ENCODE measurements at regions of chr5 and their contacts with region 1.

Region 1: DNA sequence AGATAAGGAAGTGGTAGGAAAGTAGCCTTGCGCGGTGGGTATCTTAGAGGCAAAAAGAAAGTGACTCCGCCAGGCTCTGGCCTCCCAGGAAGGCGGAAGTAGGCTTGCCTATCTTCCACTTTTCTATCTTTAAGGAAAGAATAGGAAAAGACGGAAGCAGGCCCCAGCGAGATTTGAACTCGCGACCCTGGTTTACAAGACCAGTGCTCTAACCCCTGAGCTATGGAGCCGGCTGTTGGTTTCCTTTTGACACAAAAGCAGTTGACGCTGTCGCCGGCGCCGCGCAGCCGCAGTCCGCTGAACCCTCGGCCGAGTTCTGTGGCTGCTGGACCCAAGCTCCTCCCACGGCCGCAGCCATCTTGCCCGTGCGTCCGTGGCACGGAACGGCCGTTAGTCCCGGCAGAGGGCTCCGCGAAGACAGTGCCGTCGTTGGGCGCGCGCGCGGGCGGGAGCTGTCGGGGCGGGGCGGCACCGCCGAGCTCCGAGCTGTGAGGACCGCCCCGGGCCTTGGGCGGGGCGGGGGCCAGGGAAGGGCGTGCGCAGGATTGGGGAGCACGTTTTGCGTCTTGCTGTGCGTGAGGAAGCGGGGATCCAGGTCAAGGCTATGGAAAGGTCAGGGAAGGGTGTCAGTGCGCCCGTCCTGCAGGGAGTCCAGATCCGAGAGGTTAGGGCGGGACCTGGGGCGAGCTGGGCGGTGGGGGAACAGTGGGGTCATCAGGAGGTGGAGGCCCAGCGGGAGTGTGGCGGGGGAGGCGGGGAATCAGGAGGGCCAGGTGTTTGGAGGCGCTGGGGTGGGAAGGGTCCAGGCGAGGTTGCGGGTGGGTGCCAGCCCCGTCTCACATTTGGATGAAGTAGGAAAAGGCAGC is 13.2 kb downstream of the TRIM7 start:
- DNase-seq: peak; percentile 90 to 100 (median 97)
- ATAC-seq: peak; percentile 55 to 62
- H3K4me3 Mint-ChIP-seq: peak overlapping the region; percentile 92 to 98 (median 98)
- H3K27ac Mint-ChIP-seq: peak overlapping the region; percentile 90 to 100 (median 96)
- H3K4me1 Mint-ChIP-seq: peaks cover 24 to 48% (median 29%) of the 10 kb centered on the region in 4 donors
- H3K27me3 Mint-ChIP-seq: peaks cover 0 to 15% (median 0%) of the 10 kb centered on the region in 5 donors

Region 2: GRCh38 chr5:180810210-180810958 is 381.4 kb before region 1 on chr5:
- POLR2A ChIA-PET with region 1: interaction called, 12 read pairs
- DNase-seq: peak; percentile 88 to 100 (median 96)
- ATAC-seq: peak; percentile 72 to 74
- H3K4me3 Mint-ChIP-seq: peak overlapping the region; percentile 83 to 99 (median 92)
- H3K27ac Mint-ChIP-seq: peak overlapping the region; percentile 93 to 100 (median 100)
- H3K4me1 Mint-ChIP-seq: peaks cover 47 to 84% (median 75%) of the 10 kb centered on the region in 4 donors
- H3K27me3 Mint-ChIP-seq: no peaks in the 10 kb centered on the region

Region 3: DNA sequence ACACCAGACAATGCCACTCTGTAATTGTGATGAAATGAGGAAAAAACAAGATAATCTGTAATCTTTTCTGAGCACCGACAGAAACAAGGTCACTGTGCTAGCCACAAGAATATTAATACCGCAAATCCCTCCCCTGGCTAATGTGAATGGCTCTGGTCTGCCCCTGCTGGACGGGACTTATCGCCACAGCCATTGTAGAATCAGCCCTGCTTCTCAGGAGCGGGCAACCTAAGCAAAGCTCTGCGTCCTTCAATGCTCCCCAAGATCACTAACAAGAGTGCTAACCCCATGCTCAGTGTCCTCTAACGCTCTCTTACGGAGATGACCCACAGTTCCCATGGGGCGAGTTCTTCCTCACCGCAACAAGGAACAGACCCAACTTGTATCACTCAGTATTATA is 103.5 kb before region 1 on chr5:
- POLR2A ChIA-PET with region 1: no interaction called
- DNase-seq: no peak
- ATAC-seq: no peak
- H3K4me3 Mint-ChIP-seq: no peak overlapping the region
- H3K27ac Mint-ChIP-seq: no peak overlapping the region
- H3K4me1 Mint-ChIP-seq: no peaks in the 10 kb centered on the region
- H3K27me3 Mint-ChIP-seq: peaks cover 16 to 58% (median 31%) of the 10 kb centered on the region in 5 donors

Region 4: DNA sequence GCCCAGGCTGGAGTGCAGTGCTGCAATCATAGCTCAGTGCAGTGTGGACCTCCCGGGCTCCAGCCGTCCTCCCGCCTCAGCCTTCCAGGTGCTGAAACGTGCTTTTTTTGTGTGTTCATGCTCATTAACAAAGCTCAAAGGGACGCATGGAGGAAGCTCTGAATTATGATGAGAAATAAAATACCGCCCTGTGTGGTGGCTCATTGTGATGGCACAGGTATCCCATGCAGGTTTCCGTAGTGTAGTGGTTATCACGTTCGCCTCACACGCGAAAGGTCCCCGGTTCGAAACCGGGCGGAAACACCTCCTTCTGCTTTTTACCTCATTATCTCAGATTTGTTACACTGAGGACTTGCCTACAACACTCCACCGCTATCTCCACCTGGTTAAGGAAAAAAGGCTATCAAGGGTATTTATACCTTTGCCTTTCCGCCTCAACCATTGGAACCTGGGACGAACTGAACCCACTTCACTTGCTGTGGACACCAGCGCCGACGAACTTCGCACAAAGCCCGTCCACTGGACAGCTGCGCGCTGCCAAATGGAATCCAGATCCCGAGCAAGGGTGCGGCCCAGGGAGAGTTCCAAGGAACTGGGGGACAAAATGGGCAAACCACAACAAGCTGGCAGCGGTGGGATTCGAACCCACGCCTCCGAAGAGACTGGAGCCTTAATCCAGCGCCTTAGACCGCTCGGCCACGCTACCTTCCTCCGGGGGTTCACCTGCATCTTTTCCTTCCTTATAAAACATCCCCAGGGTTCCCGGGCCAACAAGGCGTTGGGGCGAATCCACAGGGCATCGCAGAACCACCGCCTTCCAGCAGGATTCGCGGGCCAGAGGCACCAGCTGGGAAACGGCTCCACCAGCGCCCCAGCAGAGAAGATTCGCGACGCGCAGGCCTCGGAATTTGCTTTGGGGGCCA is 18.1 kb before region 1 on chr5:
- POLR2A ChIA-PET with region 1: interaction called, 35 read pairs
- DNase-seq: peak in 8 of 10 donors; percentile 25 to 82 (median 70)
- ATAC-seq: peak; percentile 80 to 91
- H3K4me3 Mint-ChIP-seq: peak overlapping the region; percentile 79 to 100 (median 94)
- H3K27ac Mint-ChIP-seq: peak overlapping the region; percentile 10 to 94 (median 86)
- H3K4me1 Mint-ChIP-seq: peaks cover 15 to 39% (median 33%) of the 10 kb centered on the region in 4 donors
- H3K27me3 Mint-ChIP-seq: peaks cover 0 to 44% (median 8%) of the 10 kb centered on the region in 5 donors

Region 5: DNA sequence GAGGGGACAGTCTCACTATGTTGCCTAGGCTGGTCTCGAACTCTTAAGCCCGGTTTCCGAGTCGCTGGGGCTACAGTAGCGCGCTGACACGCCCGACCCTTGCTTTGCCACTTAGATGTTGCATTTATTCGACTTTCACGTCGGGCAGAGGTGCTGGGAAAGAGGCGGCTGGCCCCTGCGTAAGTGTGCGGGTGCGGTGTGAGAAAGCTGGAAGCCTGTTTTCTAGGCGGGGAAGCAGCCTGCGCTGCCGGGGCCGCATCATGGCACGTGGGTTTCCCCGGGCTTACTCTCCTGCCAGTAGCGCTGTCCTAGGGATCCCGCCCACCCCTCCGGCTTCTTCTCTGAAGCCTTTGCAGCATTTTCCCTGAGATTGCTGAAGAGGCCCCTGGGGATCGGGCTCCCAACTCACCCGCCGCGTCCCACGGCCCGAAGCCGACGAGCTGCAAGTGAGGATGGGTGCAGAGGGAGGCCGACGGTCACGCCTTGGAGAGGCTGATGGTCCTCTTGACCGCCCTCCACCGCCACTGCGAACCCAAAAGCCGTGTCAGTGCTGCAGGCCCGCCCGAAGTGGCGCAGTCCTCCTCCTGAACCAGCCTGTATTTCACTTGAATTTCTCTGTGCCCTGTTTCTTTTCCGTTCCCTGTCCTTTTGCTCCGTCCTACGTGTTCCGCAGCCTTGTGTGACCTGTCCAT is 25.5 kb after region 1 on chr5:
- POLR2A ChIA-PET with region 1: interaction called, 286 read pairs
- DNase-seq: peak; percentile 46 to 82 (median 68)
- ATAC-seq: peak; percentile 29 to 36
- H3K4me3 Mint-ChIP-seq: peak overlapping the region; percentile 87 to 99 (median 98)
- H3K27ac Mint-ChIP-seq: peak overlapping the region; percentile 89 to 99 (median 96)
- H3K4me1 Mint-ChIP-seq: peaks cover 28 to 51% (median 48%) of the 10 kb centered on the region in 4 donors
- H3K27me3 Mint-ChIP-seq: peaks cover 0 to 11% (median 0%) of the 10 kb centered on the region in 5 donors

Region 6: DNA sequence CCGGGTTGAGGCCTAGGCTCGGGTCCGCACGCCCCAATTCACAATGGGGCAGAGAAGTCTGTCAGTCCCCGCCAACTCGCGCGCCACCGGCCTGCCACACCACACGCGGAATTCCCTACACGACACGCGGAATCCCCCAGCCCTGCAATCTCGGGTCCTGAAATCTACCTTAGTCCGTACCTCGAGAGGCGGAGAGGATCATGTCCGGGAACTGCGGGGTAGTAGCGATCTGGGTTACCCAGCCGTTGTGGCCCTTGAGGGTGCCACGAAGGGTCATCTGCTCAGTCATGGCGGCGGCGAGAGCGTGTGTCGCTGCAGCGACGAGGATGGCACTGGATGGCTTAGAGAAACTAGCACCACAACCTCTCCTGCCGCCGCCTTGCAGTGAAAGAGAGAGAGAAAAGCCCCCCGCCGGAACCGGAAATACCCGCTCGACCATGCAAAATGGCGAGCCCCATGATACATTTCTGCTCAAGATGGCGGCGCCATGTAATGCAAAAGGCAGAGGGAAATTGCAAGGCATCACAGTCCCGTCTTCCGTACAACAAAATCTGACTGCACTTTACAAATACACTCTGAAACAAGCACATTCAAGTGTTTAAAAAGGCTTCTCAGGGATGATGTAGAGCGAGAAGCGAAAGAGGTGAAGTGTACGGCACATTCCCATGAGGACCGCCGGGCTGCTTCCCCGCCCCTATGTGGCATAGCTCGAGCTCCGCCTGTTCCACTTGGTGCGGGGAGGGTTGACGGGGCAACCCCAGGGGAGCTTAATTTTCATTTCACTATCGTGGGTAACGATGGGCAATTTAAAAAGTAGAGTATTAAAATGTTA is 52.0 kb after region 1 on chr5 and contains the start of gene RACK1:
- POLR2A ChIA-PET with region 1: interaction called, 87 read pairs
- DNase-seq: peak; percentile 76 to 96 (median 89)
- ATAC-seq: peak; percentile 76 to 79
- H3K4me3 Mint-ChIP-seq: peak within 1 kb of the TSS; percentile 96 to 100 (median 99)
- H3K27ac Mint-ChIP-seq: peak within 1 kb of the TSS; percentile 94 to 99 (median 98)
- H3K4me1 Mint-ChIP-seq: peaks cover 35 to 78% (median 74%) of the 10 kb centered on the region in 4 donors
- H3K27me3 Mint-ChIP-seq: no peaks in the 10 kb centered on the region
- polyA plus RNA-seq, gene RACK1: 2,449 to 2,566 (median 2,565) TPM